ENCODE measurements at regions of chr10 and their contacts with region 1.

Region 1: DNA sequence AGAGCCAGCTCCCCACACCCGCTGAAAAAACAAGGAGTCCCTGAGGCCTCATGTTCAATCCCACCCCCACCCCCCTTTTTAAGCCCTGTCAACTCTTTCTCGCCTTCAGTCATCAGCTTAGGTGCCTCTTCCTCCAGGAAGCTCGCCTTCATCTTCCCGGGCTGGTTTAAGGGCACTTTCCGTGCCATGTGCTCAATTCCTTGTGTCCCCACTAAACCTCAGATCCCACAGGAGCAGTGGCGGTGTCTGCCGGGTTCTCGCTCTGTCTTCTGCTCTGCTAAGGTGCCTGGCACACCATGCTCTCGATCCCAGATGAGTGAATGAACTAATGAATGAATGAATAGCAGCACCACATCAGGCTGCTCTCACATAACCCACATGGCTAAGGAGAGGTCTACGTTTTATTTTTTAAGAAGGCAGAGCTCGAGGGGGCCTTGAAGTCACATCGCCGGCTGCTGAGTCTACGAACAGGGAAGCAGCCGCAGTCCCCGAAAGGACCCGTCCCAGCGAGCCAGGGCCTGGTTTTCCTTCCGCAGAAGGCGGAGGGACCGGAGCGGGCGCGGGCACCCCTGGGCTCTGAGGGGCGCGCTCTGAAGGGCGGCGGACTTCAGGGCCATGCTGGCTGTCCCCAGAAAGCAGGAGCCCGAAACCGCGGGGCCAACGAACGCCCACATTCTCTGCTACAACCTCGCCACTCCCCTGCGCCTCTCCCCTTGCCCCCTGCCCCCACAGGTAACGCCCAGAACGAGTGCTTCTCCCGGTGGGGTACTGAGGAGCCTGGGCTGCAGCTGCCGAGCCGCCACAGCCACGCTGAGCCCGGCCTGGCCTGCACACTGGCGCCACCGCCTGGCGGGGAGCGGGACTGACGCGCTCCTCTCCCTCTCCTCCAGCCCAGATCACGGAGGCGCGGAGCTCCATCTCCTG is 73.4 kb upstream of the KCNMA1 start:
- DNase-seq: peak in 1 of 2 experiments; percentile 73
- H3K4me3 ChIP-seq: peak overlapping the region; percentile 27; the same call in 1 of the 2 replicates
- H3K27ac ChIP-seq: no peak overlapping the region
- H3K4me1 ChIP-seq: no peaks in the 10 kb centered on the region
- H3K27me3 ChIP-seq: no peaks in the 10 kb centered on the region
- CTCF ChIP-seq: peak; percentile 98

Region 2: GRCh38 chr10:77165445-77166208 is 545.4 kb before region 1 on chr10:
- CTCF ChIA-PET with region 1: interaction called, 10 read pairs
- POLR2A ChIA-PET with region 1: no interaction called
- intact Hi-C with region 1: loop called (anchors 1 kb)
- DNase-seq: peak; percentile 49 to 54
- H3K4me3 ChIP-seq: no peak overlapping the region
- H3K27ac ChIP-seq: no peak overlapping the region
- H3K4me1 ChIP-seq: peaks cover 60% of the 10 kb centered on the region
- H3K27me3 ChIP-seq: no peaks in the 10 kb centered on the region
- CTCF ChIP-seq: peak; percentile 96

Region 3: DNA sequence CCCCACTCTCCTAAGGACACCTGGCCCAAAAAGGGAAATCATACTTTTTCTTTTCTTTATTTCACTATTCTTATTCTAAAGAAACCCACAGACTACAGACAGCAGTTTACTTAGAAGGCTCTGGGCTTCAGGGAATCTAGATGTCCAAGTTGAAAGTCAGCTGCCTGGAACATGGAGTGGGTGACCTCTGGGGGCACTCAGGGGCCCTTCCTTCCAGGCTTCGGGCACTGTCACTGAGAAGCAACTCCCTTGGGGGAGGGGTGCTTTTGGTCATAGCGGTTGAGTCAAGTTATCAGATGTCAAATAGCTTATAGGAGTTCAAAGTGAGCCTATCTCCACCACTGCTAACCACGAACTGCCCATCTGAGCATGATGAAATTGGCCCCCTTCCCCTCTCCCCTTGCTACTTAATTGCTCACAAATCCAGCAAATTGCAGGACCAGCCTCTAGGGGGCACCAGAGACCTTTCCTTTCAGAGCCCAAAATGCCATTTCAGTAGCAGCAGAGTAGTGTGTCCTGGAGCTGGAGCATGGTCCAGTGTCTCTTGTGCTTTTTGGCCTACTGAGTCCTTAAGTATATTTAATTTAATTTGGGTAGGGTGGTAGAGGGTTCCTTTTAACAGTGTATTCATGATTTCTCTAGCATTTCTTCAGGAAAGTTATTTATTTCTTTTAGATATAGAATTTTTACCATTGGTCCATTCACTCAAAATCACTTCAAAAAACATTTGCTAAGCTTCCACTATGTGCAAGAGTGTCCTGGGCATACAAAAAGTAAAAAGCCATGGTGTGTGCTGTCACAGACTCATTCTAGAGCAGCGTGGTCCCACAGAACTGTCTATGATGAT is 537.2 kb before region 1 on chr10:
- CTCF ChIA-PET with region 1: interaction called, 13 read pairs
- POLR2A ChIA-PET with region 1: no interaction called
- intact Hi-C with region 1: loop called (anchors 2 kb)
- DNase-seq: peak; percentile 63 to 71
- H3K4me3 ChIP-seq: no peak overlapping the region
- H3K27ac ChIP-seq: no peak overlapping the region
- H3K4me1 ChIP-seq: peaks cover 6% of the 10 kb centered on the region
- H3K27me3 ChIP-seq: no peaks in the 10 kb centered on the region
- CTCF ChIP-seq: peak; percentile 98

Region 4: GRCh38 chr10:78579995-78580394 is 869.0 kb after region 1 on chr10:
- CTCF ChIA-PET with region 1: no interaction called
- POLR2A ChIA-PET with region 1: no interaction called
- intact Hi-C with region 1: loop called (anchors 5 kb)
- DNase-seq: peak in 1 of 2 experiments; percentile 38
- H3K4me3 ChIP-seq: no peak overlapping the region
- H3K27ac ChIP-seq: no peak overlapping the region
- H3K4me1 ChIP-seq: no peaks in the 10 kb centered on the region
- H3K27me3 ChIP-seq: peaks cover 9% of the 10 kb centered on the region; the same call in 1 of the 2 replicates
- CTCF ChIP-seq: no peak